MCF 10A (cell line): ENCODE measurements at regions of chr11 and their contacts with region 1.

Region 1: DNA sequence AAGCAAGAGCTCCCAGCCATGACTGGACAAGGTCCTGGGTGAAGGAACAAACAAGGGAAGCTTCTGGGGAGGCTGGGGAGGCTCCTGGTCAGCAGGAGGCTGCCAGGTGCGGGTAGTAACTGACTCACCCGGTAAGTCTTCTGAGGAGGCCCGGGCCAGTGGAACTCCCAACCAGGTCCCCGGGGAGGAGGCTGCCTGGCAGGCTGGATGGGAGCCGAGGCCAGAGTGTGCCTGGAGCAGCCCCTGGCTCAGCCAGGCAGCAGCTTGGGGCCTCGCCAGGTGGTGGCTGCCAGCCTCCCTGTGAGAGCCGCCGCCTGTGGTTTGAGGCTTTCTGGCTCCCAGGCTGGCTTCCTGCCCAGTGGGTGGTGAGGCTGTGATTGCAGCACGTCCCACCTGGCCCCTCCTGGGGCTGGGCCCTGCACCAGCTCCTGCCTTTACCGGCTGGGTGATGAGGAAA is 46.2 kb downstream of the IGF2 start:
- DNase-seq: peak; percentile 99
- H3K4me3 Mint-ChIP-seq: peak overlapping the region; percentile 46
- H3K27ac Mint-ChIP-seq: peak overlapping the region; percentile 74
- H3K4me1 Mint-ChIP-seq: peaks cover 36% of the 10 kb centered on the region
- H3K27me3 Mint-ChIP-seq: no peaks in the 10 kb centered on the region
- CTCF ChIP-seq: no peak

Region 2: DNA sequence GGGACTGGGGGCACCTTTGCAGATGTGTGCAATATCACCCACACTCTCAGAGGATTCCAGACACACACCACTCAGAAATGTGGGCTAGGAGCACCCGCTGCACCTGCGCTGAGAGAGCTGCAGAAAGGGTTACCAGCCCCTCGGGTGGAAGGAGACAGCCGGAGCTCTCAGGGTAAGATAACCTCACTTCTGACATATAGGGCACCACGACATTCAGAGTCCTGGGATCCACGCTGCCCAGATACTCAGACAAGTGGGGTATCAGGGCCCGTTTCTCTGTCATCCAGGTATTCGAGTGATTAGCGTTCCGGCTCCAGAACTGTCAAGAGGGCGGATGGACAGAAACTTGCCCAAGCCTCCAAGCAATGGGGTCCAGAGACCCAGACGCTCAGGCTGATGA is 264.4 kb before region 1 on chr11:
- CTCF ChIA-PET with region 1: no interaction called
- POLR2A ChIA-PET with region 1: no interaction called
- intact Hi-C with region 1: no loop called
- DNase-seq: no peak
- H3K4me3 Mint-ChIP-seq: peak overlapping the region; percentile 21
- H3K27ac Mint-ChIP-seq: peak overlapping the region; percentile 79
- H3K4me1 Mint-ChIP-seq: peaks cover 51% of the 10 kb centered on the region
- H3K27me3 Mint-ChIP-seq: no peaks in the 10 kb centered on the region
- CTCF ChIP-seq: no peak

Region 3: DNA sequence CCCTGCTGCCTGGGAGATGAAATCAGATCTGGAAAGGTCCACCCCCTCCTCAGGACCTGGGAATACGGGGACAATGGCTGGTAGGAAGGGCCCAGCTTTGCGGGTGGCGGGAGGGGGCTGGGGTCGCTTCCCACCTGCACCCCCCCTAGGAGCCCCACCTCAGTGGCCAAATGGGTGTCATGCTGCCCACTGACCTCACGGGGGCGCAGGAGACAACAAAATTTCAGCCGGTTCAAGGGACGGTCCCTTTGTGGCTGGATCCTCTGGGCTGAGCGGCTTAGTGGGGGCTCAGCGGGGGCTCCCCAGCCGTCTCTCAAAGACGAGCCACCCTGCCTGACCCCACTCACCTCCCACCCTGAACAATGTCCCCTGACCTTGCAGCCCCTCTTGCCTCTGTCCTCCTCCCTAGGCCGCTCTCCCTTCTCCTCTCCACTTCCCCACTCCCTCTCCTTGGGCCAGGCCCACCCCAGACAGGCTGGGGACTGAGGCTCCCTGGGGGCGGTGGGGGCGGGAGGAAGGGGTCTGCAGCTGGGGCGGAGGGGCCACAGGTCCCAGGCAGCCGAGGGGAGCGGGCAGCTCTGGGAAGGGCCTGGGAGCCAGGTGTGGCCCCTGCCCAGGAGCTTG is 56.0 kb before region 1 on chr11:
- CTCF ChIA-PET with region 1: interaction called, 12 read pairs
- POLR2A ChIA-PET with region 1: no interaction called
- intact Hi-C with region 1: no loop called
- DNase-seq: no peak
- H3K4me3 Mint-ChIP-seq: no peak overlapping the region
- H3K27ac Mint-ChIP-seq: no peak overlapping the region
- H3K4me1 Mint-ChIP-seq: no peaks in the 10 kb centered on the region
- H3K27me3 Mint-ChIP-seq: no peaks in the 10 kb centered on the region
- CTCF ChIP-seq: no peak

Region 4: DNA sequence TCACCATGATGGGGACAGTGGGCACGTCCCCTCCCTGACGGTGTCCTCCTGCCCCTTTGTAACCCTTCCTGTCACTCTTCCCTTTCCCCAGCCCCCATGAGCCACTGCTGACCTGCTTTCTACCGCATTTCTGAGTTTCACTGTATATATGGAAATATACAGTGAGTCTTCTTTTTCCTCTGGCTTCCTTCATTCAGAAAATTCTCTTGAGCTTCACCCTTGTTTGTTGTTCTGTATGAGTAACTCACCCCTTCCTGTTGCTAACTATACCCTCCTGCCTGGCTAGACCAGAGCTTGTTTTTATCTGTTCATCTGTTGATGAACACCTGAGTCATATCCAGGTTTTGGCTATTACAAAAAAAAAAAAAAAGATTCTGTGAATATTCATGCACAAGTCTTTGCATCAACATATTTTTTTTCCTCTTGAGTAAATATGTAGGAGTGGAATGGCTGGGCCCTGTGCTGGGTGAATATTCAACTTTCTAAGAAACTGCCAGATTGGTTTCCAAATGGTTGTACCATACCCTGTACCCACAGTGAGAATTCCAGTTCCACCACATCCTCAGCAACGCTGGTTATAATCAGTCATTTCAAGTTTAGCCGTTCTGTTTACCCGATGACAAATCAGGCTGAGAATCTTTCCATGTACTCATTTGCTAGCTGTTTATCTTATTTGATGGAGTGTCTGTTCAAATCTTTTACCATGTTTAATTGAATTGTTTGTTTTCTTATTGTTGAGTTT is 15.8 kb before region 1 on chr11:
- CTCF ChIA-PET with region 1: interaction called, 4 read pairs
- POLR2A ChIA-PET with region 1: interaction called, 17 read pairs
- intact Hi-C with region 1: loop called (anchors 1 kb)
- DNase-seq: peak; percentile 70
- H3K4me3 Mint-ChIP-seq: peak overlapping the region; percentile 5
- H3K27ac Mint-ChIP-seq: peak overlapping the region; percentile 82
- H3K4me1 Mint-ChIP-seq: peaks cover 22% of the 10 kb centered on the region
- H3K27me3 Mint-ChIP-seq: no peaks in the 10 kb centered on the region
- CTCF ChIP-seq: no peak

Region 5: DNA sequence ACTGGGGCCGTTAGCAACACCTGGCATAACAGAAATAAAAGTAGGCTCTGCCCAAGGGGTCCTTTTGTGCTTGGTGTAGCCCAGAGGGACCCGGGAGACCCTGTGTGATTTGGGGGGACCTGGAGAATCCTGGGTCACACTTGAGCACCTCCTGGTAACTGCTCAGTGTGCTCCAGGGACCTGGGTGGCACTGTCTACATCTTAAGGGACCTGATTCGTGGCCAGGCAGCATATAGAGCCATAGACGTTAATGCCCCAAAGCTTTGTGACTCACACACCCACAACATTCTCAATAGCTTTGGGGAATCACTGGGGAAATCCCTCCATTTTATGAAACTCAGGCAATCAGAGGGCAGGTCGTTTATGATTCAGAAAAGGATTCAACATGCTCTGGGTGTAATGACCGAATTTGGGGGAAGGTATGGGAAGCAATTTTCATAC is 49.8 kb after region 1 on chr11:
- CTCF ChIA-PET with region 1: no interaction called
- POLR2A ChIA-PET with region 1: interaction called, 4 read pairs
- intact Hi-C with region 1: loop called (anchors 5 kb)
- DNase-seq: peak; percentile 68
- H3K4me3 Mint-ChIP-seq: peak overlapping the region; percentile 22
- H3K27ac Mint-ChIP-seq: peak overlapping the region; percentile 36
- H3K4me1 Mint-ChIP-seq: peaks cover 13% of the 10 kb centered on the region
- H3K27me3 Mint-ChIP-seq: peaks cover 75% of the 10 kb centered on the region
- CTCF ChIP-seq: no peak